Right ventricle myocardium inferior (tissue), 1 donor: ENCODE measurements at regions of chr2 and their contacts with region 1.

Region 1: DNA sequence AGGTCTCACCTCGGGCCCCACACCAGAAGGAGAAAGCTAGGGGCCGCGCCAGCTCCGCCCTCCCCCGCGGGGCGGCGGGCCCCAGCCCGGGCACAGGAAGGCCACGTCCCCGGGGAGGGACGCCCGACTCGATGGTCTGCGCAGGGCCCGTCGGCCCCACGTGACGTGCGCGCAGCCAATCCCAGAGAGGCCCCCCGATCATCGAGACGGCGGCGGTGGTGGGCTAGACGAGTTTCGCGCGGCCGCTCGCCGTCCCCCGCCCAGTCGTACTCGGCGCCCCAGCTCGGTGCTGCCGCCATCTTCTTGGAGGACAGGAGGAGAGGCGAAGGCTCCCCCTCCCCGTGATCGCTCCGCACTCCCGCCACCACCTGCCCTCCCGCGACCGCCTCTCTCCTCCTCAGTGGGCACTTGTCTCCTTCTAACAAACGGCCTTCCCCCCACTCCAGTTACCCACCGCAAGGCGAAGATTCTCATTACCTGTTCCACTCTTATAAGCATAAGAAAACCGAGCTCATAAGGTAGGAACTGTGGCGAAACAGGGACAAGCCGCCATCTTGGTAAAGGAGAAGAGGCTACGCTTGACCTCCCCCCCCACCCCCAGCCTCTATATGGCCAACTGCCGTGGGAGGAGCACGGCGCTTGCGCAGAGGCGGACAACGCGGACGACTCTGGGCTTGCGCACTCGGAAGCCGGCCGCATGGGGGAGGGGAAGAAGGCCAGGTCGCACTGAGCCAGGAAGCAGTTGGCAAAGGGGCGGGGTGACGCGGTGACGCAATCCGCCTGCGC is at the start of gene HDLBP:
- DNase-seq: peak; percentile 100
- ATAC-seq: peak; percentile 93
- total RNA-seq, gene HDLBP: 393 TPM

Region 2: GRCh38 chr2:241149925-241150659 is 165.2 kb before region 1 on chr2 and contains the start of gene PPP1R7:
- intact Hi-C with region 1: loop called (anchors 10 kb)
- DNase-seq: peak; percentile 98
- ATAC-seq: peak; percentile 97
- total RNA-seq, gene PPP1R7: 66.6 TPM

Region 3: GRCh38 chr2:241271641-241272297 is 43.5 kb before region 1 on chr2:
- intact Hi-C with region 1: loop called (anchors 1 kb)
- DNase-seq: peak; percentile 94
- ATAC-seq: peak; percentile 85

Region 4: DNA sequence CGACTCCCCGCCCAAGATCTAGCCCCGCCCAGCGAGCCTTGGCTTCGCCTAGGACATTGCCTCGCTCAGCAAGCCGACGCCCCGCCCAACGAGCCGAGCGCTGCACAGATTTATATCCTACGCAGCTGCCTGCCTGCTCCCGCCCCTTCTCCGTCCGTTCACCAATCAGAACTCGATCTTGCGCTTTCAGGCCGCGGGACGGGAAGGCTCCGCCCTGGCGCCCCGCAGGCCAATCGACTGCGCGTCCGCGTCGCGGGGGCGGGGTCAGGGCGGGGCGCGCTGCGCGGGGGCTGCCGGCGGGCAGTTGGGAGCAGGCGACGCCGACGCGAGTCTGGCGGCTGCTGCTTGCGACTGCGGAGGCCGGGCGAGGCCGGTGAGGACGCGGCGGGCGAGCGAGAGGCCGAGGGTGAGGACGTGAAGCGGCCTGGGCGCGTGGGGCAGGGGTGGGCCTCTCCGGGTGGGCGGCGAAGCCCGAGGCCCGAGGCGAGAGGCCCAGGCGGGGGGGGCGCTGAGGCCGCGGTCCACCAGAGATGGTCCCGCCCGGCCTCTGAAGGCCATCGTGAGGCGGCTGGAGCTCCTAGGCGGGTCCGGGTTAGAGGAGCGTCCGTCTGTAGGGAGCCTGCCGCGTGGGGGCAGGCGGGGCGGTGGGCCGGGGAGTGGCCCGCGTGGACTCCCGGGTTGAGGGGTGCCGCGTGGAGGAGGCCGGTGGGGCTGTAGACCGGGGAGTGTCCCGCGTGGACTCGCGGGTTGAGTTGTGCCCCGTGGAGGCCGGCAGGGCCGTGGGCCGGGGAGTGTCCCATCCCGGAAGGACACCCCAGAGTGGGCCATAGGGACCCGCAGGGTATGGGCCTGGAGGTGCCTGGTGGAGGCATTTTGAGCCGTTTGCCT is 40.9 kb after region 1 on chr2 and contains the start of gene FARP2:
- intact Hi-C with region 1: loop called (anchors 1 kb)
- DNase-seq: peak; percentile 100
- ATAC-seq: peak; percentile 94
- total RNA-seq, gene FARP2: 15.0 TPM